ENCODE measurements at regions of chr10 and their contacts with region 1.

Region 1: DNA sequence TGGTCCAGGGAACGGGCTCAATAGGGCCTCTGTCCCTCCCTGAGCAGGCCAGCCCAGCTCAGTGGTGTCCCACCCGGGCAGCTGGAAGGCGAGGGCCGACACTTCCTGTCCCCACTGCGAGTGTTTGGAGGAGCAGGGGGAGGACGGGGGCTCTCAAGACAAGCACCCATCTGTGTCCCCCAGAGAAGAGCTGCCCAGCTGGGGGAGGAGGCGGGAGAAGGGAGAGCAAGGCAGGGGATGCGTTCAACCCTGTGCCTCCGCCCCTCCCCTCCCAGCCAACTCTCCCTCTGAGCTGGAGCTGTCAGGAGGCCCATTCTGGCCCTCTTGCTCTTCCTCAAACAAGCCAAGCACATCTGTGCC is 35.7 kb downstream of the ZCCHC24 start:
- DNase-seq: peak; percentile 86 to 99 (median 96)

Region 2: GRCh38 chr10:79445141-79445976 is 35.7 kb after region 1 on chr10 and contains the start of gene ZCCHC24:
- intact Hi-C with region 1: loop called (anchors 1 kb)
- DNase-seq: peak; percentile 93 to 100 (median 98)

Region 3: GRCh38 chr10:79976999-79977398 is 567.3 kb after region 1 on chr10:
- intact Hi-C with region 1: no loop called
- DNase-seq: no peak

Measured in head of caudate nucleus (tissue), 42 donors.